ENCODE measurements at regions of chr4 and their contacts with region 1.

Region 1: DNA sequence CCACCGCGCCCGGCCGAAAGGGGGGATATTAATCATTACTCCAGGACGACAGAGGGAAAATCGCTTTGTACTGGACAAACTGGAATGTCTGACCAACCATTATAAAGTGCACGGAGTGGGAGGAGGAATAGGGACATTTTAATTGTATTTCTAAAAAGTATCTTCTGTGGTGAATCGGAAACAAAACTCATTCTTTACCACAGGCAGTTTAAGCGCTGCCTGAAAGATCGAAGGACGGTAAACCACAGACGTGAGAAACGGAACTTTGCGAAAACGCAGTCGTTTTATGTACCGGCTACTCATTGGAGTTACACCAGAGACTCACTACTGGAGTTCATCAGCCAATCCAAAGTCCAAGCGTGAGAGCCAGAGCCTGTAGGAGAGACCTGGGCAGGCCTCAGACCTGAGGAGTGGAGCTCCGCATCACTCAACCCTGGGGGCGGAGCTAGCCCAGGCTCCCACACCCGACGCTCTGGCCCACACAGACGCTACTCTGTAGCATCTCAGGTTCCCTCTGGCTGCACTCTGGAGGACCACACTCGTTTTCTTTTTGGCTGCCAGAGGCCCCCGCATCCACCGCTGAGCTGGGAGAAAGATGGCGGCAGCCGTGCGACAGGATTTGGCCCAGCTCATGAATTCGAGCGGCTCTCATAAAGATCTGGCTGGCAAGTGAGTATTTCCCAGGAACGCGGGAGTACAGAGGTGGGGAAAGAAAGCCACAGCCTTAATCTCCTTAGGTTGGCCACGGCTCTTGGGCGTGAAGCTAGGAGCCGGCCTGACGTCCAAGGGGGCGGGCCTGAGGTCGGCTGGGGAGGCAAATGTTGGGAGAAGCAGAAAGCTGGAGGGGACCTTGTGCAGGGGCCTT is at the start of gene COPS4:
- DNase-seq: peak; percentile 89
- ATAC-seq: peak; percentile 97
- H3K4me3 Mint-ChIP-seq: peak within 1 kb of the TSS; percentile 100
- H3K27ac Mint-ChIP-seq: peak within 1 kb of the TSS; percentile 99
- H3K4me1 Mint-ChIP-seq: peaks cover 18% of the 10 kb centered on the region
- H3K27me3 Mint-ChIP-seq: no peaks in the 10 kb centered on the region
- total RNA-seq, gene COPS4: 29.3 to 30.3 TPM

Region 2: DNA sequence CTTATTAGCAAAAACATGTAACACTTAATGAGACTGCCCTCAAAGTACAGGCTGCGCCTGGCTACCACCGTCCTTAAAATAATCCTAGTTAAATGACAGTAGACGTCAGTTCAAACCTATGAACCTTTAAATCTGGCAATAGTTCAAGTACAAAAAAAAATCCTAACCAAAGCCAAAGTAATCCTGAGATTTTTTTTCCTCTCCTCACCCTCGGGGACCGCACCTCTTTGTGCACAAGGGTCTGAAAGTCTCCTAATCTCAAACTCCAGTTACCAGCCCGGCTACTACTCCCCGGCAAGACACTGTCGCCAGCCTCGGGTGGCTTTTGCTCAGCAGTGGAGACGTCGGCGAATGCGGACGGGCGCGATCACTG is 144.3 kb before region 1 on chr4:
- POLR2A ChIA-PET with region 1: no interaction called
- DNase-seq: no peak
- ATAC-seq: no peak
- H3K4me3 Mint-ChIP-seq: peak overlapping the region; percentile 95
- H3K27ac Mint-ChIP-seq: peak overlapping the region; percentile 97
- H3K4me1 Mint-ChIP-seq: peaks cover 29% of the 10 kb centered on the region
- H3K27me3 Mint-ChIP-seq: no peaks in the 10 kb centered on the region

Region 3: DNA sequence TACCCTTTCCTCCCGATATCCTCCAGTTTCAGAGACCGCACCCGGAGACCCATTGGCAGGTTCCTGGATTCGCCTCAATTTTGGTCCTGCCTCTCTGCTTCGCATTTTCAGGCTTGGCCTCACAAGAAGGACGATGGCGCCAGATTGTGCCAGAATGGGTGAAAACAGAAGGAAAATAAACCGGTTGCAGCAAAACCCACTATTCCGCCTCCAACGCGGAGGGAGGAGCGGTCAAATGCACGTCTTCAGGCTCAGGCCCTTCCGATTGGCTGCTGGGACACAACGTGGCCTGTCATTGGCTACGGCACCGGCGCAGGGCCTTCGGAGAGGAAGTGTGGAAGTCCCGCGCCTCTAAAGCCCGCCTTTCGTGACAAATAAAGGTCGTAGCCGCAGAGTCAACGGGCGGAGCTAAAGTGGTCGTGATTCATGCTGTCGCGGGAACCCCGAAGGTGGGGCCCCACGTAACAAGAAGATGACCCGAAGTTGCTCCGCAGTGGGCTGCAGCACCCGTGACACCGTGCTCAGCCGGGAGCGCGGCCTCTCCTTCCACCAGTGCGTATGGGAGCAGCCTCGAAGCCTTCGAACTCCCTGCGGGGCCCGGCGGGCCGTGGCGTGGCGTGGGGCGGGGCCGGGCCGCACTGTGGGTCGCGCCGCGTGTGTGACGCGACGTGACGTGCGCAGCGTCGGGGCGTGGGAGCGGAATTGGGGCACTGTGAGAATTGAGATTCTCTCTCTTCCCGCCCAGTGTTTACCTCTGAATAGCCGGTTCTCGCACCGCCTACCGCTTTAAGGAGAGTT is 134.3 kb before region 1 on chr4 and contains the start of gene THAP9:
- POLR2A ChIA-PET with region 1: interaction called, 11 read pairs
- DNase-seq: peak; percentile 95
- ATAC-seq: peak; percentile 89
- H3K4me3 Mint-ChIP-seq: no peak within 1 kb of the TSS
- H3K27ac Mint-ChIP-seq: no peak within 1 kb of the TSS
- H3K4me1 Mint-ChIP-seq: peaks cover 39% of the 10 kb centered on the region
- H3K27me3 Mint-ChIP-seq: no peaks in the 10 kb centered on the region
- total RNA-seq, gene THAP9: 4.0 to 4.7 TPM

Region 4: GRCh38 chr4:82965763-82966162 is 69.1 kb before region 1 on chr4:
- POLR2A ChIA-PET with region 1: no interaction called
- DNase-seq: no peak
- ATAC-seq: no peak
- H3K4me3 Mint-ChIP-seq: no peak overlapping the region
- H3K27ac Mint-ChIP-seq: no peak overlapping the region
- H3K4me1 Mint-ChIP-seq: peaks cover 3% of the 10 kb centered on the region
- H3K27me3 Mint-ChIP-seq: no peaks in the 10 kb centered on the region

Region 5: DNA sequence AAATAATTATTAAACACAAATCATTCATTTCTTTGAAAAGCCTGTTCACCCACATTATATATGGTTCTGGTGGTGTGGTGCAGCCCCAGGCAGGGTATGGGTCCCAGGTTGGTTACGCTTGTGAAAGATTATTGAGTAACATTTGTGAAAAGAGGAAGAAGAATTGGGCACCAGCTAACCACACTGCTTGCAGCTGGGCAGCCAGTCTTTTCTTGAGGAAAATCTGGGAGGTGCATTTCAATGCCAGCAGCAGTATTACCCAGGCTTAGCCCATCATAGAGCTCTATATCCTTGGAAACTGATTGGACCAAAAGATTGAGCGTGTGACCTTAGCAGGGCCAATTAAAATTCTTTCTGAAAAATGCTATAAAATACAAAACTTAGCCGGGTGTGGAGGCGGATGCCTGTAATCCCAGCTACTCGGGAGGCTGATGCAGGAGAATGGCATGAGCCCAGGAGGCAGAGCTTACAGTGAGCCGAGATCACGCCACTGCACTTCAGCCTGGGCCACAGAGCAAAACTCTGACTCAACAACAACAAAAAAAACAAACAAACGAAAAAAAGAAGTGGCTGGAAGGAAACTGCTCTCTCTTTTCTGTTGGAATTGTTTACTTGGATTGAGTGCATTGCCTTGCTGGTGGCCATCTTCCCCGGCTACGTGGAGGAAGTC is 89.4 kb after region 1 on chr4:
- POLR2A ChIA-PET with region 1: no interaction called
- DNase-seq: no peak
- ATAC-seq: no peak
- H3K4me3 Mint-ChIP-seq: peak overlapping the region; percentile 3
- H3K27ac Mint-ChIP-seq: no peak overlapping the region
- H3K4me1 Mint-ChIP-seq: peaks cover 30% of the 10 kb centered on the region
- H3K27me3 Mint-ChIP-seq: no peaks in the 10 kb centered on the region